ENCODE measurements at regions of chr11 and their contacts with region 1.

Region 1: GRCh38 chr11:11798586-11799438 is 43.0 kb upstream of the USP47 start:
- DNase-seq: peak; percentile 60
- ATAC-seq: peak; percentile 96
- H3K4me3 ChIP-seq: no peak overlapping the region
- H3K27ac ChIP-seq: no peak overlapping the region
- H3K4me1 ChIP-seq: no peaks in the 10 kb centered on the region
- H3K27me3 ChIP-seq: 0 out of 5 replicates have a peak, but pooled peaks cover 0 to 3% of the 10 kb centered on the region in 2 experiments
- CTCF ChIP-seq: peak; percentile 86
- EP300 ChIP-seq: no peak
- POLR2A ChIP-seq: no peak
- RAD21 ChIP-seq: peak; percentile 76

Region 2: GRCh38 chr11:10770626-10771254 is 1028.1 kb before region 1 on chr11:
- CTCF ChIA-PET with region 1: no interaction called
- POLR2A ChIA-PET with region 1: no interaction called
- in situ Hi-C with region 1: loop called (anchors 10 kb)
- intact Hi-C with region 1: no loop called
- DNase-seq: peak; percentile 33
- ATAC-seq: peak; percentile 77
- H3K4me3 ChIP-seq: no peak overlapping the region
- H3K27ac ChIP-seq: no peak overlapping the region
- H3K4me1 ChIP-seq: no peaks in the 10 kb centered on the region
- H3K27me3 ChIP-seq: no peaks in the 10 kb centered on the region
- CTCF ChIP-seq: peak; percentile 72
- EP300 ChIP-seq: no peak
- POLR2A ChIP-seq: no peak
- RAD21 ChIP-seq: no peak

Region 3: GRCh38 chr11:11659567-11660362 is 139.0 kb before region 1 on chr11:
- CTCF ChIA-PET with region 1: no interaction called
- POLR2A ChIA-PET with region 1: no interaction called
- in situ Hi-C with region 1: no loop called
- intact Hi-C with region 1: no loop called
- DNase-seq: no peak
- ATAC-seq: peak; percentile 51; the same call in 1 of the 3 replicates
- H3K4me3 ChIP-seq: no peak overlapping the region
- H3K27ac ChIP-seq: no peak overlapping the region
- H3K4me1 ChIP-seq: no peaks in the 10 kb centered on the region
- H3K27me3 ChIP-seq: peaks cover 1 to 13% of the 10 kb centered on the region in 2 experiments; a peak in 2 of 5 replicates
- CTCF ChIP-seq: no peak
- EP300 ChIP-seq: no peak
- POLR2A ChIP-seq: no peak
- RAD21 ChIP-seq: no peak

Region 4: GRCh38 chr11:11757909-11758308 is 40.9 kb before region 1 on chr11:
- CTCF ChIA-PET with region 1: no interaction called
- POLR2A ChIA-PET with region 1: no interaction called
- in situ Hi-C with region 1: no loop called
- intact Hi-C with region 1: no loop called
- DNase-seq: no peak
- ATAC-seq: no peak
- H3K4me3 ChIP-seq: no peak overlapping the region
- H3K27ac ChIP-seq: no peak overlapping the region
- H3K4me1 ChIP-seq: no peaks in the 10 kb centered on the region
- H3K27me3 ChIP-seq: peaks cover 0 to 40% of the 10 kb centered on the region in 2 experiments; a peak in 4 of 5 replicates
- CTCF ChIP-seq: no peak
- EP300 ChIP-seq: no peak
- POLR2A ChIP-seq: no peak
- RAD21 ChIP-seq: no peak

Region 5: GRCh38 chr11:11826260-11826659 is 27.4 kb after region 1 on chr11:
- CTCF ChIA-PET with region 1: no interaction called
- POLR2A ChIA-PET with region 1: no interaction called
- in situ Hi-C with region 1: no loop called
- intact Hi-C with region 1: no loop called
- DNase-seq: no peak
- ATAC-seq: no peak
- H3K4me3 ChIP-seq: no peak overlapping the region
- H3K27ac ChIP-seq: no peak overlapping the region
- H3K4me1 ChIP-seq: no peaks in the 10 kb centered on the region
- H3K27me3 ChIP-seq: no peaks in the 10 kb centered on the region
- CTCF ChIP-seq: no peak
- EP300 ChIP-seq: no peak
- POLR2A ChIP-seq: no peak
- RAD21 ChIP-seq: no peak

Region 6: GRCh38 chr11:11848891-11849746 is 50.3 kb after region 1 on chr11:
- CTCF ChIA-PET with region 1: interaction called, 13 read pairs
- POLR2A ChIA-PET with region 1: no interaction called
- in situ Hi-C with region 1: no loop called
- intact Hi-C with region 1: loop called (anchors 1 kb)
- DNase-seq: peak; percentile 60
- ATAC-seq: peak; percentile 95
- H3K4me3 ChIP-seq: no peak overlapping the region
- H3K27ac ChIP-seq: no peak overlapping the region
- H3K4me1 ChIP-seq: peaks cover 64% of the 10 kb centered on the region
- H3K27me3 ChIP-seq: no peaks in the 10 kb centered on the region
- CTCF ChIP-seq: peak; percentile 77
- EP300 ChIP-seq: no peak; a peak in 1 of 4 replicates
- POLR2A ChIP-seq: no peak
- RAD21 ChIP-seq: peak; percentile 67

Region 7: DNA sequence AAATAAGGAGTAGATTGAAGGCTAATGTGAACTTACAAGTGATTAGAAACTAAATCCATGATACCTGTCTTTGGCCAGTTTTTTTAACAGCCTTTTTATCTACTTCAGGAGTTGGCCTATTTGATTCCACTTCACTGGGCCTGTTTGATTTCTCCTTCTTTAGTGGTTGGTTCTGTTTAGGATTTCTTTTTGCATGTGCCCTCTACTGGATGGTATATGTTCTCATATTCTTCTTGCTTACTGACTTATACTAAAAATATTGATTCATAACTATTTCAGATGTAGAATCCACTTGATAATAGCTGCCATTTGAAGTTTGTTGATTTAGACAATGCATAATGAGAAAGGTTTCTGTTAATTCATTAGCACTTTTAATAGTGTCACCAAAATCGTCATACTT is 96.9 kb after region 1 on chr11:
- CTCF ChIA-PET with region 1: interaction called, 3 read pairs
- POLR2A ChIA-PET with region 1: no interaction called
- in situ Hi-C with region 1: no loop called
- intact Hi-C with region 1: loop called (anchors 2 kb)
- DNase-seq: no peak
- ATAC-seq: no peak
- H3K4me3 ChIP-seq: no peak overlapping the region
- H3K27ac ChIP-seq: no peak overlapping the region
- H3K4me1 ChIP-seq: no peaks in the 10 kb centered on the region
- H3K27me3 ChIP-seq: no peaks in the 10 kb centered on the region
- CTCF ChIP-seq: no peak
- EP300 ChIP-seq: no peak
- POLR2A ChIP-seq: no peak
- RAD21 ChIP-seq: no peak

Region 8: DNA sequence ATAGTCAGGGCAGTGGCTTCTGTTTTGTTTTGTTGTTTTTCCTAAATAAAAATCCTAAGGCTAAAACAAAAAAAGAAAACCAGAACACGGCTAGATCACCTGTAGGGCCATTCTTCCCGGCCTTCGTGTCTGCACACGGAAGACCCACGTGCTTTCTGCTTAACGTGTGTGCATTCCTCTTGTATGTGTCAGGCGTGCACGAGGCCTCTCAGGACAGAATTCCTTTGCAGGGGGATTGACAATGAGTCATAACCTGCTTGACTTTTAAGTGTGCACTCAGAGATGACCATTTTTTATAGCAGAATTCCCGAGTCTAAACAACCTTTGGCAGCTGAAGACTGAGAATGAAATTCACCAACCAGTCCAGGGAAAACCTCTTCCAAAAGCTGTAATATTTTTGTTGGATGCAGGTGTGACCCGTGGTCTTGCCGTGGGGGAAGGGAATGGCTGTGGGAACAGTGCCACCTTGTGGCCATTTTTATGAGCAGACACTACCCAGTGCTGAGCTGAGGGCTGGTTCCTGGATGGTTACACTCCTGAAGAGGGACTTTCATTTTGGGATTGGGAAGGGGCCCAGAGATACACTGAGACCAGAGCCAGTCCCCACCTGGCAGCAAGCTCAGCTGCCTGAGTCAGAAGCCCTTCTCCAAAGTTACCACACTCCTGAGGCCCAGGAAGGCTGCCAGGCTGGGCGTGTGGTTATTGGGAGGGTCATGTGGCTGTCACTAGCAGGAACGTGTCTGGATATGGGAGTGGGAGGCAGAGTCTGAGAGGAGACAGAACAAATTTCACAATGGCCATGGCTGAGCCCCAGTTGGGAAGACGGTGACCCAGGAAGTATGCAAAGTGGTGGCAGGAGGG is 245.4 kb after region 1 on chr11:
- CTCF ChIA-PET with region 1: no interaction called
- POLR2A ChIA-PET with region 1: no interaction called
- in situ Hi-C with region 1: loop called (anchors 10 kb)
- intact Hi-C with region 1: loop called (anchors 1 kb)
- DNase-seq: peak; percentile 87
- ATAC-seq: peak; percentile 89
- H3K4me3 ChIP-seq: peak overlapping the region in 1 of 3 experiments; percentile 50; a peak in 2 of 6 replicates
- H3K27ac ChIP-seq: no peak overlapping the region
- H3K4me1 ChIP-seq: peaks cover 26% of the 10 kb centered on the region
- H3K27me3 ChIP-seq: no peaks in the 10 kb centered on the region; a peak in 1 of 5 replicates
- CTCF ChIP-seq: peak; percentile 94
- EP300 ChIP-seq: peak in 1 of 2 experiments; percentile 32; a peak in 1 of 4 replicates
- POLR2A ChIP-seq: no peak
- RAD21 ChIP-seq: peak; percentile 82

Measured in HepG2 (cell line).